ENCODE measurements at regions of chr3 and their contacts with region 1.

Region 1: DNA sequence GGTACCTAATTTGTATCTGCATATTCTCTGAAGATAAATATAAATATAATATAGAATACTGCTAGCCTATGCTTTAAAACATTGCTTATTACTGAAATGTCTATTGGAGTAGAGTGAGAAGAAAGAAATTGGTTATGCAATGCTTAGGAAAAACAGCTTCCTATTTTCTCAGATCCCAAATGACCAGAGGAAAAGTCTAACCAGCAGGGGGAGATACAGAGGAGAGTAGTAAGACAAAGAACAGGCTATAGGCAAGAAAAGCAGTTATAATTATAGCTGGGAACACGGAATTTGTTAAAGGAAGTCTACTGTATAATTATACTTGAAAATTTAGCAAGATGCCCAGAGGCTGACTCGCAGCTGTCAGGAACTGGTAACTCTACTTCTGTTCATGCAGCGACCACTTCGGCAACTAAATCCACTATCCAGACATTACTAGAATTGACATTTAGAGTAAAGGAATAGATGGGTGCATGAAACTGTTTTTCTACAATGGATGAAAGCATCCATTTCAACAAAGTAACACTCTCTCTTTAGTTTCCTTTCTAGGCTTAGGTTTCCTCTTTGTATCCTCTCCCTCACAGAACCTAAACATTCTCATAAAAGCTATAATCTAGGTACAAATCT is 97.2 kb downstream of the TBC1D5 start:
- DNase-seq: peak in 2 of 6 donors; percentile 14 to 16
- ATAC-seq: peak; percentile 78 to 90 (median 88)
- H3K4me3 ChIP-seq: no peak overlapping the region
- H3K27ac ChIP-seq: no peak overlapping the region
- H3K4me1 ChIP-seq: peaks cover 0 to 3% (median 0%) of the 10 kb centered on the region in 3 donors
- H3K27me3 ChIP-seq: no peaks in the 10 kb centered on the region
- CTCF ChIP-seq: peak; percentile 51 to 68 (median 59)

Region 2: GRCh38 chr3:17573396-17573795 is 71.8 kb before region 1 on chr3:
- intact Hi-C with region 1: no loop called
- DNase-seq: no peak
- ATAC-seq: no peak
- H3K4me3 ChIP-seq: no peak overlapping the region
- H3K27ac ChIP-seq: no peak overlapping the region
- H3K4me1 ChIP-seq: peaks cover 0 to 5% (median 4%) of the 10 kb centered on the region in 3 donors
- H3K27me3 ChIP-seq: no peaks in the 10 kb centered on the region
- CTCF ChIP-seq: no peak

Region 3: DNA sequence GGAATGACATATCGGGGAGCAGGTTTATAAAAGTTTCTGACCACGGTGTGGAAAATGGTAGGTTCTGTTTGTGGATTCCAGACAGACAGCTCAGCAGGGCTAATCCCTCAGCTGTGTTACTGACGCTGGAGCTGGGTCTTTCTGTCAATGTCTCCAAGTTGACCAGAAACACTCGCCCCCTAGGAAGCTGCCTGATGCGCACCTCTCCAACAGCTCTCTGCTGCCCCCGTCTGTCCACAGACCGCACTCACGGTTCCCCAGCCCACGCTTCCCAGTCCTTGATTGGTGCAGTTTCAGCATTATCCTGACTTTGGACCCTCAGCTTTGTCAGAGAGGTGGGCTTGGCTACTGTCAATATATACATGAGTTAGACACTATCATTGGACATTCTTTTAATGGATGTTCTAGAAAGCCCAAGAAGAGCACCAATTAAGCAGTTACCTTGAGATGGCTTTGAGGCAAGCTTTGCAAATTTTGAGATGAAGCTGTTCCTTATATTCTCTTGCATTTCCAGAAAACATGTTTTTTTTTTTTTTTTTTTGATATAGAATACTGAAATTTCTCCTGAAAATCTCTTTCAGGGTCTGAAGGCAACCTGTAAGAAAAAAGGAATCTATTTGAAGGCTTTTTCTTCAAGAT is 196.1 kb after region 1 on chr3:
- intact Hi-C with region 1: loop called in 1 of 3 experiments (anchors 10 kb)
- DNase-seq: peak; percentile 27 to 90 (median 67)
- ATAC-seq: peak; percentile 81 to 99 (median 96)
- H3K4me3 ChIP-seq: no peak overlapping the region
- H3K27ac ChIP-seq: no peak overlapping the region
- H3K4me1 ChIP-seq: no peaks in the 10 kb centered on the region
- H3K27me3 ChIP-seq: no peaks in the 10 kb centered on the region
- CTCF ChIP-seq: peak; percentile 66 to 92 (median 85)

Region 4: GRCh38 chr3:18149386-18149785 is 504.2 kb after region 1 on chr3:
- intact Hi-C with region 1: no loop called
- DNase-seq: no peak
- ATAC-seq: no peak
- H3K4me3 ChIP-seq: no peak overlapping the region
- H3K27ac ChIP-seq: no peak overlapping the region
- H3K4me1 ChIP-seq: no peaks in the 10 kb centered on the region
- H3K27me3 ChIP-seq: no peaks in the 10 kb centered on the region
- CTCF ChIP-seq: no peak